Activated CD4-positive, alpha-beta memory T cell treated with anti-CD3 and anti-CD28 coated beads for 36 hours (primary cell): ENCODE measurements at regions of chr16 and their contacts with region 1.

Region 1: DNA sequence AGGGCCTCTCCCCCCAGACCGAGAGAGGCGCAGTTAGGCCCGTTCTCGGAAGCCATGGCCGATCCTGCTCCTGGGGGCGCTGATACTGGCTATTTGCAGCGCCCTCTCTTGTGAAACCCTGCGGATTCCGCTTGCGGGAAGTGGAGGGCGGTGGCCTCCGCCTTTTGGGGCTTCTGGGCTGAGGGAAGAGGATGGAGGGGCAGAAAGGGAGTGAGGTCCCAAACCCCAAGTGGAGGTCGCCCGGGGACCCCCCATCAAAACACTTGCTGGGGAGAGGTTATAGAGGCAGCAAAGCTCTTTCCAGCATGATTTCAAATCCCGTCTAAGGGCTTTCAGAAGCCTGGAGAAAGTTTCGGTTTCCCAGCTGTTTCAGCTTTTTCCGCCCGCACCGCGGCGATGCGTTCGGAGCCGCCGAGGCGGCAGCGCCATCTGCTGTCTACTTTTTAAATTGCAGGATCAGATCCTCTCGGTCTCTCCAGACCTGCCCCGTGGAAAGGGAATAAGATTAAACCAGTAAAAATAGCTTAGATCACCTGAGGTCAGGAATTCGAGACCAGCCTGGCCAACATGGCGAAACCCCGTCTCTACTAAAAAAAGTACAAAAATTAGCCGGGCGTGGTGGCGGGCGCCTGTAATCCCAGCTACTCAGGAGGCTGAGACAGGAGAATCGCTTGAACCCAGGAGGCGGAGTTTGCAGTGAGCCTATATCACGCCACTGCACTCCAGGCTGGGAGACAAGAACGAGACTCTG is 15.8 kb downstream of the SNX20 start:
- DNase-seq: peak; percentile 87
- H3K4me3 Mint-ChIP-seq: peak overlapping the region; percentile 63
- H3K27ac Mint-ChIP-seq: peak overlapping the region; percentile 33
- H3K4me1 Mint-ChIP-seq: peaks cover 39% of the 10 kb centered on the region
- H3K27me3 Mint-ChIP-seq: no peaks in the 10 kb centered on the region

Region 2: DNA sequence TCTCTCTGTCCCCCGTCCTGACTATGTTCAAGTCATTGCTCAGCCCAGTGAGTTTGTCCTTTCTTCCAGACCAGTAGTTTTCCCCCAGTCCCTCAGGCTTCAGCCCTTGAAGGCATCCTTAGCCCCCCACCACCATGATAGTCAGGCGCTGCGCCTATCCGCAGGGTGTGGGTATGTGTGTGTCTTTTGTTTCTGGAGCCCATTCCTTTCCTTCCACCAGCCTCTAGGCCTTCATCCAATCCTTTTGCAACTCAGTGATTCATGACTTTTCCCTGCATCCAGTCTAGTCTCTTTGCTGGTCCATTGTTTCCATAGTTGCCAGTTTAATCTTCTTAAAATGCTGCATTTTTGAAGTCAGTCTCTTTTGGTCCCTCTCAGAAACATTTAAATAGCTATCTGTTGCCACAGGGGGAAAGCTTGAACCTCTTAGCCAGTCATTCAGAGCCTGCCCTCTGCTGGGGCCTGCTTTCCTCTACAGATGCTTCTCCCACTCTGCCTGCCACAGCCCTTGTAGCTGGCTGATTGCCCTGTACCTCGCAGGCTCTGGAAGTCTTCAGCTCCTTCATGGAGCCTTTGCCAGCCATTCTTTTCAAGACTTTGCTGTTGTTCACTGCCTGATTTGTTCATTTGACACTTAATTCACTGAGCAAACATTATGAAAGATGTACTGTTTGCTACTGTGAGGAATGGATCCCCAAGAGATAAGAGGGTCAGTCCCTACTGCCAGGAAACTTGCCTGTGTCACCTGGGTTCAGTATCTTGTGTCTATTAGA is 454.9 kb before region 1 on chr16:
- CTCF ChIA-PET with region 1: interaction called, 11 read pairs
- POLR2A ChIA-PET with region 1: no interaction called
- intact Hi-C with region 1: loop called (anchors 5 kb)
- DNase-seq: peak; percentile 80
- H3K4me3 Mint-ChIP-seq: no peak overlapping the region
- H3K27ac Mint-ChIP-seq: peak overlapping the region; percentile 46
- H3K4me1 Mint-ChIP-seq: peaks cover 17% of the 10 kb centered on the region
- H3K27me3 Mint-ChIP-seq: no peaks in the 10 kb centered on the region

Region 3: DNA sequence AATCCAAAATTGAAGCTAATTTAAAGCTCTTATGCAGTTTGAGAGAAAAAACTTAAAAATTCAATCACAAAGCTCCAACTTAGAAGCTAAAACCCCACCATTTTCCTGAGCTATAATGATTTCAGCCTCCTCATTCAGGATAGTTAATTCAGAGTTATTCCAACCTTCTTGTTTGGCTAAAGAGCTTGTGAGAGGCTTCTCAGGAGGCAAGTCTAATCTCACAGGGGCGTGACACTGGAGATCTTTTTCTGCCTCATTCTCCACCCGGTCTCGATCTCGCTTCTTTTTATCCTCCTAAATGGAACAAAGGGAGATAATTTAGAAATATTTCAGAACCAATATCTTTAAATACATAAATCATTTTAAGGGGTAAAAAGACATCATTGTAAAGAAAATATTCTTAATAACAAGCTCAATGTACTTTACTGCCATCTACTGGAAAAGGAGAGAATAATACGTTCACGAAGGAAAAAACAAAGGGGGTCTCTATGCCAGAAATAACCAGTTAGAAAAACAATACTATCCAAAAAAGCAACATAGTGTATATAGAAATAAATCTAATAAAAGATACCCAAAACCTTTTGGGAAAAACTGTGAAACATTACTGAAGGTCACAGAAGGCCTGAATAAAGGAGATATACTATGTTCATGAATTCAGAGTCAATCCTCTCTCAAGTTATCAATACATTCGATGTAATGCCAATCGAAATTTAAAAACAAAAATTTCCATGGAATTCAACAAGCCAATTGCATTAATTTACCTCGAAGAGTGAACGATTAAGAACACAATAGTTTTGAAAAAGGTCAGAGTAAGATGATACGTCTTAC is 310.5 kb before region 1 on chr16:
- CTCF ChIA-PET with region 1: interaction called, 17 read pairs
- POLR2A ChIA-PET with region 1: no interaction called
- intact Hi-C with region 1: no loop called
- DNase-seq: no peak
- H3K4me3 Mint-ChIP-seq: no peak overlapping the region
- H3K27ac Mint-ChIP-seq: no peak overlapping the region
- H3K4me1 Mint-ChIP-seq: peaks cover 30% of the 10 kb centered on the region
- H3K27me3 Mint-ChIP-seq: no peaks in the 10 kb centered on the region

Region 4: DNA sequence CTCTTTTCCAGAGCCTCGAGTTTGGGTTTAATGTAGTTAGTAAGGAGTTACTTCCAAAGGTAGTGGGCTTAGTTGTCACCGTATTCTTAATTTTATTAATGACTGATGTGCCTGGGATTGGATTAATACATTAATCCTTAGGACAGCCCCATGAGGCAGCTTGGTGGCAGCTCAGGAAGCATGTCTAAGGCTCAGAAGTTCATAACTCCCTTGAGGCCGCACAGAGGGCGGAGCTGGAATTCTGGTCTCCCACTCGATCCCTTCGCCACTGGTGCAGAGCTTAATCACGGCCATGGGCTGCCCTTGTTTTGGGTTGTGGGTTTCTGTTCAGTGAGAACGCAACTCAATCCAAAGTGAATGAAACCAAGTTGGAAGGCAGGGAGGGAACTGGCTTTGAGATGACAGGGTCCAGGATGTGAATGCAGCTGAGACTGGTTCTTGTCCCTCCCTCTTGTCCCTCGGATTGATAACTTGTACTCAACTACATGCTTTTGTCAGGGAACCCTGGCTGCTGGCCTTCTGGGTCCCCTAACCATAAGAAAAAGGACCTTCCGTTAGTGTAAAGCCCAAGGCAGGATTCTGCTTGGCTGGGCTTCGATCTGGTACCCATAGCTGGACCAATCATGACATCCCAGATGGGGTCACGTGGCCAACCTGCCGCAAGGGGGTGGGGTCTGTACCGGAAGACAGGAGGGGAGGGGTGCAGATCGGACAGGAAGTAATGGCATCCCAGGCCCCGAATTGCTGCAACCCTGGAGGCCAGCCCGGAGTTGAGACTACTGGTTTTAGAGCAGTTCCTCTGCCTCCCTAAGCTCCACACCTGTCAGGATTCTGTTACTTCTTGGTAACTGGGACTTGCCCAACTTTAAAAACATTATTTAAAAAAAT is 29.6 kb before region 1 on chr16:
- CTCF ChIA-PET with region 1: interaction called, 12 read pairs
- POLR2A ChIA-PET with region 1: no interaction called
- intact Hi-C with region 1: no loop called
- DNase-seq: peak; percentile 57
- H3K4me3 Mint-ChIP-seq: no peak overlapping the region
- H3K27ac Mint-ChIP-seq: no peak overlapping the region
- H3K4me1 Mint-ChIP-seq: peaks cover 3% of the 10 kb centered on the region
- H3K27me3 Mint-ChIP-seq: no peaks in the 10 kb centered on the region

Region 5: GRCh38 chr16:50735629-50736122 is 70.4 kb after region 1 on chr16:
- CTCF ChIA-PET with region 1: interaction called, 10 read pairs
- POLR2A ChIA-PET with region 1: no interaction called
- intact Hi-C with region 1: no loop called
- DNase-seq: peak; percentile 61
- H3K4me3 Mint-ChIP-seq: no peak overlapping the region
- H3K27ac Mint-ChIP-seq: peak overlapping the region; percentile 10
- H3K4me1 Mint-ChIP-seq: peaks cover 54% of the 10 kb centered on the region
- H3K27me3 Mint-ChIP-seq: no peaks in the 10 kb centered on the region

Region 6: DNA sequence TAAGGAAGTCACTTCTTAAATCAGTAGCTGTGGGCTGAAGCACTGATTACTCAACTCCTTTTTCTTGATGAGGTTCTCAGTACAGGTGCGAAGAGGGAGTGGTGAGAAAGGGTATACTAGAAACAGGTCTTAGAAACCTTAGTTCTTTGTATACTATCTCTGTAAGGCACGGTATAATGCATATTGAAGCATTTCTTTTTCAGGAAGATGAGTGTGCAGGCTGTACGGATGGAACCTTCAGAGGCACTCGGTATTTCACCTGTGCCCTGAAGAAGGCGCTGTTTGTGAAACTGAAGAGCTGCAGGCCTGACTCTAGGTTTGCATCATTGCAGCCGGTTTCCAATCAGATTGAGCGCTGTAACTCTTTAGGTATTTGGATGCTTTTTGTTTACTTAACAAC is 115.7 kb after region 1 on chr16:
- CTCF ChIA-PET with region 1: interaction called, 11 read pairs
- POLR2A ChIA-PET with region 1: no interaction called
- intact Hi-C with region 1: no loop called
- DNase-seq: peak; percentile 50
- H3K4me3 Mint-ChIP-seq: peak overlapping the region; percentile 33
- H3K27ac Mint-ChIP-seq: peak overlapping the region; percentile 78
- H3K4me1 Mint-ChIP-seq: peaks cover 70% of the 10 kb centered on the region
- H3K27me3 Mint-ChIP-seq: no peaks in the 10 kb centered on the region